Vagina (tissue), 2 donors: ENCODE measurements at regions of chr6 and their contacts with region 1.

Region 1: GRCh38 chr6:34414999-34415858 is 10.6 kb downstream of the RPS10 start:
- DNase-seq: peak in 1 of 2 donors; percentile 90
- H3K4me3 ChIP-seq: no peak overlapping the region
- H3K27ac ChIP-seq: peak overlapping the region; percentile 83
- H3K4me1 ChIP-seq: peaks cover 12% of the 10 kb centered on the region
- H3K27me3 ChIP-seq: no peaks in the 10 kb centered on the region
- CTCF ChIP-seq: peak; percentile 74 to 81 (median 78)
- POLR2A ChIP-seq: no peak

Region 2: GRCh38 chr6:34196126-34196830 is 219.0 kb before region 1 on chr6:
- intact Hi-C with region 1: loop called (anchors 10 kb)
- DNase-seq: no peak
- H3K4me3 ChIP-seq: peak overlapping the region; percentile 43 to 78
- H3K27ac ChIP-seq: no peak overlapping the region
- H3K4me1 ChIP-seq: peaks cover 10% of the 10 kb centered on the region
- H3K27me3 ChIP-seq: no peaks in the 10 kb centered on the region
- CTCF ChIP-seq: peak; percentile 89 to 98 (median 96)
- POLR2A ChIP-seq: no peak

Region 3: DNA sequence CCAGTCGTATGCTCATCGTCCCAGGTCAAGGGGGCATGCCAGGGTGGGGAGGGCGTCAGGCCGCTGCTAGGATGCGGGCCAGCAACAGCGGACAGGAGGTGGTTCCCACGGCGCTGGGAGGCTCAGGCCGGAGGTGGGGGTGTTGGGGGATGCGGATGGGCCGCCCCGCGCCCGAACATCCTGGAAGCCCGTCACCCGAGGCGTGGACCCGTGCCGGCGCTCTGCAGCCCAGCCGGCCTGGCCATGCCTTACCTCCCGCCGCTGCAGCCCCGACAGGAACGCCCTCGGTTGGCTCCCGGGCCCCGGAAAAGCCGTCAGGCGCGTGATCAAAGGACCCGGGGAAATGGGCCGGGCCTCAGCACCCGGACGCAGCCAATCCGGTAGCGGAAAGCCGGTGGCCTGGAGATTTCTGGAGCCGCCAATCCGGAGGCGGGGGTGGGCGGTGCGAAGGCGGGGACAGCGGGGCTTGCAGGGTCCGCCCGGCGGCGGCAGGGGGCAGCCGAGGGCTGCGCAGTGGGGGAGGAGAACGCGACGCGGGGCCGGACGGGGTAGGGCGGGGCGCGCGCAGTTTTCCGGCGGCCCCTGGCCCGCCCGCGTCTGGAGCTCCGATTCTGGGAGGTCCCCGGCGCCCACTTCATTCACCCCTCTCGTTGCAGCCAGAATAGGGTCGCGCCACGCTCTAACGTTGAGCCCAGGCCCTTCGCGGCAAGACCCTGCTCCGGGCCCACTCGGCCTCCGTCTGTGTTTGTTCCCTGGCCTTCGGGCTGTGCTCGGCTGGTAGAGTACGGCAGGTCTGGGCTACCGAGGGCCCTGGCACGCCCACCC is 166.3 kb before region 1 on chr6 and contains the start of gene SMIM29:
- intact Hi-C with region 1: loop called (anchors 5 kb)
- DNase-seq: peak in 1 of 2 donors; percentile 97
- H3K4me3 ChIP-seq: peak within 1 kb of the TSS; percentile 75 to 96
- H3K27ac ChIP-seq: peak within 1 kb of the TSS; percentile 99
- H3K4me1 ChIP-seq: peaks cover 43% of the 10 kb centered on the region
- H3K27me3 ChIP-seq: no peaks in the 10 kb centered on the region
- CTCF ChIP-seq: peak; percentile 79 to 97 (median 94)
- POLR2A ChIP-seq: peak in 1 of 2 donors; percentile 79
- total RNA-seq, gene SMIM29: 22.3 TPM

Region 4: GRCh38 chr6:34301408-34301807 is 113.8 kb before region 1 on chr6:
- intact Hi-C with region 1: no loop called
- DNase-seq: no peak
- H3K4me3 ChIP-seq: no peak overlapping the region
- H3K27ac ChIP-seq: no peak overlapping the region
- H3K4me1 ChIP-seq: peaks cover 7% of the 10 kb centered on the region
- H3K27me3 ChIP-seq: no peaks in the 10 kb centered on the region
- CTCF ChIP-seq: no peak
- POLR2A ChIP-seq: no peak

Region 5: DNA sequence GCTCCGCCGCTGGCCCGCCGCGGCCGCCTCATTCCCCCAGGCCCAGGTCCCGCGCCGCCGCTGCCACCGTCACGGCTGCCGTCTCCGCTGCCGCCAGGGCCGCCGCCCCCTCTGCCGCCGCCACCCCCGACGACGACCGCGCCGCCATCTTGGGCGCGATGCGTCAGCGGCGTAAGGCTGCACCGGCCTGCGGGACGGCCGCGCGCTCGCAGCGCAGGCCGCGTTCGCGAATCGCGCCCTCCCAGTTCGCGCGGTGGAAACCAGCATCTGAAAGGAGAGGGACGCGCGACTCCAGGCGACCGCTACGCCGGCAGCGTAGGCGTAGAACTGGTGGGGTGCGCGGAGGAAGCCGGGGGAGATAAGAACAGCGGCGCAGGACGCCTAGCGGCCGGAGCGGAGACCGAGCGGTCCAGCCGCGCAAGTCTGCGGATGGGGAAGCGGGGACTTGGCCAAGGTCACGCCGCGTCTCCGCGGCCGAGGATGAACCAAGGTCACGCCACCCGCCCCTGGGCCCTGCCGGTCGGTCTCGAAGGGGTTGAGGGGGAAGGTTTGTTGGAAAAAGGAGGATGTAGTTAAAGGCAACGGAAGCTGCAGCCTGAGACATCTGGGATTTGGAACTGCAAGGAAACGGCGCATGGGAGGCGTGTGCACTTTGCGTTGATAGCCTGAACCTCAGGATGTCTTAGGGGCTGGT is 22.6 kb before region 1 on chr6 and contains the start of gene NUDT3:
- intact Hi-C with region 1: loop called (anchors 1 kb)
- DNase-seq: peak in 1 of 2 donors; percentile 94
- H3K4me3 ChIP-seq: peak within 1 kb of the TSS; percentile 78 to 90
- H3K27ac ChIP-seq: peak within 1 kb of the TSS; percentile 92
- H3K4me1 ChIP-seq: peaks cover 26% of the 10 kb centered on the region
- H3K27me3 ChIP-seq: no peaks in the 10 kb centered on the region
- CTCF ChIP-seq: peak; percentile 52 to 86 (median 59)
- POLR2A ChIP-seq: peak in 1 of 2 donors; percentile 75
- total RNA-seq, gene NUDT3: 27.0 TPM

Region 6: GRCh38 chr6:34484899-34485298 is 69.7 kb after region 1 on chr6:
- intact Hi-C with region 1: no loop called
- DNase-seq: no peak
- H3K4me3 ChIP-seq: no peak overlapping the region
- H3K27ac ChIP-seq: no peak overlapping the region
- H3K4me1 ChIP-seq: no peaks in the 10 kb centered on the region
- H3K27me3 ChIP-seq: no peaks in the 10 kb centered on the region
- CTCF ChIP-seq: no peak
- POLR2A ChIP-seq: no peak